Right cardiac atrium (tissue), 5 donors: ENCODE measurements at regions of chr4 and their contacts with region 1.

Region 1: DNA sequence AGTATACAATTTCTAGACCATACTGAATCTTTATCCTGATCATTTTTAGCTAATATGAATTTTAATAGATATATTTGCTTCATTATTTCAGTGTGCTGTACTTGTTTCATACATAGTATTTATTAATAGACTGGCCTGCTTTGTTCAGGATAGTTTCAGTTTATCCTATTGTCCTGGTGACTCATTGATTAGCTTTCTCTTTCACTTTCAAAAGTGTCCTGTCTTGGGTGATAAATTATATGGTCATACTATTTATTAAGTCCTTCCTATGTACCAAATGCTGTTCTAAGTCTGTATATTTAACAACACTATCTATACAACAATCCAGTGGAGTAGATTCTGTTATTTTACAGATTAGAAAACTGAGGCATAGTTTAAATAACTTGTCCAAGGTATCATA is 153.8 kb upstream of the RAPGEF2 start:
- DNase-seq: no peak
- ATAC-seq: peak in 1 of 2 donors; percentile 42
- H3K4me3 ChIP-seq: no peak overlapping the region
- H3K27ac ChIP-seq: no peak overlapping the region
- H3K4me1 ChIP-seq: no peaks in the 10 kb centered on the region
- H3K27me3 ChIP-seq: no peaks in the 10 kb centered on the region

Region 2: DNA sequence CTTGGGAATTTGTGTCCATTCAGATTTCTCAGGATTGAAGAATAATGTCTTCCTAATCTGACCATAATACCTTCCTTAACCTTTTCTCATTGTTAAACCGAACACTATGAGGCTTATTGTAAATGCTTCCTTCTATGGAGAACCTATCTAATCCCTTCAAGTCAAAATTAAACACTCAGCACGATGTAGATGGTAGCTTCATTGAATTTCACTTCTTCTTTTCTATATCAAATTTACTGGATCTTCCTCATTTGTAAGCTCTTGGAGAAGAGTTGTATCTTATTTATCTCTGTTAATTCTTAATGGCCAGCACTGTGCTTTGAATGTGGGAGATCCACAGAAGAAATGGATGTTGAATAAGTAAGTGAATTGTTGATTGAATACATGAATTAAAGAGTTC is 44.8 kb after region 1 on chr4:
- intact Hi-C with region 1: loop called in 1 of 4 experiments (anchors 2 kb)
- DNase-seq: no peak
- ATAC-seq: no peak
- H3K4me3 ChIP-seq: no peak overlapping the region
- H3K27ac ChIP-seq: no peak overlapping the region
- H3K4me1 ChIP-seq: no peaks in the 10 kb centered on the region
- H3K27me3 ChIP-seq: no peaks in the 10 kb centered on the region

Region 3: GRCh38 chr4:159035570-159035969 is 86.5 kb after region 1 on chr4:
- intact Hi-C with region 1: no loop called
- DNase-seq: no peak
- ATAC-seq: no peak
- H3K4me3 ChIP-seq: no peak overlapping the region
- H3K27ac ChIP-seq: no peak overlapping the region
- H3K4me1 ChIP-seq: no peaks in the 10 kb centered on the region
- H3K27me3 ChIP-seq: no peaks in the 10 kb centered on the region